Motor neuron (in vitro differentiated cells): ENCODE measurements at regions of chr5 and their contacts with region 1.

Region 1: GRCh38 chr5:74934949-74935751 is 69.0 kb upstream of the FAM169A start:
- ATAC-seq: peak in 2 of 8 experiments; percentile 60 to 88
- H3K4me3 ChIP-seq: no peak overlapping the region
- H3K27ac ChIP-seq: no peak overlapping the region
- H3K4me1 ChIP-seq: no peaks in the 10 kb centered on the region

Region 2: GRCh38 chr5:75078027-75078426 is 142.9 kb after region 1 on chr5:
- in situ Hi-C with region 1: no loop called
- ATAC-seq: no peak
- H3K4me3 ChIP-seq: no peak overlapping the region
- H3K27ac ChIP-seq: no peak overlapping the region
- H3K4me1 ChIP-seq: no peaks in the 10 kb centered on the region

Region 3: DNA sequence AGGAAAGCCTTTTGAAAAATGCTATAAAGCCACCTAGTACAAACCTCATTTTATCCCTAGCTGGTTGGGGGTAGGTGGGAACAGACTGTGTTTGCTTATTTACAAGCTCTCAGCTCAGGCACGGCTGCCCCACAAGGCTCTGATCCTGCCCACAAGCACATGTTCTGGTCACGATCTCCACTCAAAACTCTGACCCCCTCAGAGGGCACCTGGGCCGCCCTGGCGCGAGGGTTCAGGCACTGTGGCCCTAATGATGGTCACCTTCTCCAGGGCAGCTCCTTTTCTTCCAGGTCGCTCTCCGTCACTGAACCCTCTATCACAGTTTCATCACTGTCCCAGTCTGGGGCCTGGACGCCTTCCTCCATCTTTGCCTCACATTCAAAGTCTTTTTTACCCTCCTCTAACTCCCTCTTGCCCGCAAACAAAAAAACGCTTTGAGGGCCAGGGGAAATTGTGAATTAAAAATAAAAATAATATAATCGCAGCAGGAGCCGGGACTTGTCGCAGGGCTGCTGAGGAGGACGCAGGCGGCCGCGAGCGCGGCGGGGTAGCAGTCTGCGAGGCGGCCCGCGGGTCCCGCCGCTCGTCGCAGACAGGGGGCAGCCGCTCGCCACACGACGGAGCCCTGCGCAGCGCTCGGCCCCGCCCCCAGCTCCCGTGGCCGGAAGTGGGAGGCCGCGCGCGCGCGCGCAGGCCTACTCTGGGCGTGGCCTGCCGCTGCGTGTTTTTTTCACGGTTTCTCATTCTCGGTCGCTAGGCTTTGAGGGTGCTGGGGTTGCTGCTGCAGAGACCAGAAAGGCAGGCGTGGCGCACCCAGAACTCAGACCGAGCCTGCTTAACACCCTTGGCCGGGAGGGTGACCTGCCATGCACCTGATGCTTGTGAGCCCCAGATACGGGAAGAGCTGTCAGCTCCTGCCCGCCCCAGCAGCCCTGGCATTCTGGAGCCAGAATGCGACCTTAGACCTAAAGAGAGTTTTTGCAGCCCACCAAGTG is 301.5 kb after region 1 on chr5 and contains the start of gene ANKRD31:
- in situ Hi-C with region 1: loop called in 1 of 9 experiments (anchors 25 kb)
- ATAC-seq: peak; percentile 96 to 99 (median 98)
- H3K4me3 ChIP-seq: peak within 1 kb of the TSS; percentile 45 to 65 (median 54)
- H3K27ac ChIP-seq: peak within 1 kb of the TSS; percentile 56 to 79
- H3K4me1 ChIP-seq: peaks cover 8 to 12% of the 10 kb centered on the region in 2 donors
- total RNA-seq, gene ANKRD31: 0.18 to 1.1 (median 0.46) TPM

Region 4: GRCh38 chr5:75281716-75282465 is 346.7 kb after region 1 on chr5:
- in situ Hi-C with region 1: no loop called
- ATAC-seq: no peak
- H3K4me3 ChIP-seq: no peak overlapping the region
- H3K27ac ChIP-seq: no peak overlapping the region
- H3K4me1 ChIP-seq: peaks cover 5% of the 10 kb centered on the region in 2 donors